Left ventricle myocardium superior (tissue), 1 donor: ENCODE measurements at regions of chr3 and their contacts with region 1.

Region 1: GRCh38 chr3:155701882-155702465 is 42.9 kb downstream of the PLCH1 start:
- DNase-seq: no peak
- ATAC-seq: peak; percentile 77

Region 2: DNA sequence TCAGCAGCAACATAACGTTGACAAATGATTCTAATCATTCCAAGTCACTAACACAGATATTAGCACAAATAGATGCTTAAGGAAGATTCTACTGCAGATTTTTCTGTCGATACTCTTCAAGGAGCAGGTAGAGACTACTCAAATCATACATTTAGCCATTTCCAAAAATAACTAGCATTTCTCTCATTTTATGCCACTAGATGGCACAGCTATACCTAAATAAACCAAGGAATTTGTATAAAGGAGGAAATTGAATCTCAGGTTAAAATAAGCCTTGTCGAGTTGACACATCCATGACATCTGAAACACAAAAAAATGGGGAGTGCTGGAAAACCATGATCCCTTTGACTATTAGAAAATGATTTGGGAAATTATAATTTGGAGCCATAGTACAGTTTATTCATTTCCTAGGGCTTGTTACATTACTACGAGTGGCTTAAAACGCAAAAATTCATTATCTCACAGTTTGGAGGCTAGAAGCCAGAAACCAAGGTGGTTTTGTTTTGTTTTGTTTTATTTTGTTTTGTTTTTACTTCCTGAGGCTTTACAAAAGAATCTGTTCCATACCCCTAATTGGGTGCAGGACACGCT is 349.0 kb before region 1 on chr3:
- intact Hi-C with region 1: loop called (anchors 10 kb)
- DNase-seq: no peak
- ATAC-seq: peak; percentile 36

Region 3: DNA sequence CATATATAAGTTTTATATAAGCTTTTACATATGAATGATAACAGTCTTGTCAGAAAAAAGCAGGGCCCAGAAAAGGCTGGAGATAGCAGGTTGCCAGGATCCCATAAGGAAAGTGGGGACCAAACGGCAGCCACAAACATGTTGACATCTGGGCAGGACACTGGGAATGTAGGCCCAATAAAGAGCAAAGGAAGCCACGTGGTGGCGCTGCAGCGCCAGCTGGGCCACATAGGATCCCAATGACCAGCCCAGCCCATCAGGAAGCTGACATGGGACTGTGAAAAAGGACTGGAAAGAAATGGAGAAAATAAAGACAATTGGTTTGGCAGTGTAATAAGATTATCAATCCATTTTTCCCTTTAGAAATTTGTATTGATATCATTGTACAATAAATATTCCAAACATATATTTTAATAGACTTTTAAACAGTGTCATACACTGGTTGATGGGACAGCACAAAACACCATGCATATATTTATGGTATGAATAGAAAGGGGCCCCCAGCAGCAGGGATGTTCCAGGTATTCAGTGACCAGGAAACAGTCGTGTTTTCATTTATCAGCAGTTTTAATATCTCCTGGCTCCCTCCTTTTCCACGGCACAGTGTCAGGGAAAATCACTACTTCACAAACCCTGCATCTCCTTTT is 319.5 kb before region 1 on chr3:
- intact Hi-C with region 1: loop called (anchors 2 kb)
- DNase-seq: peak; percentile 91
- ATAC-seq: peak; percentile 89

Region 4: DNA sequence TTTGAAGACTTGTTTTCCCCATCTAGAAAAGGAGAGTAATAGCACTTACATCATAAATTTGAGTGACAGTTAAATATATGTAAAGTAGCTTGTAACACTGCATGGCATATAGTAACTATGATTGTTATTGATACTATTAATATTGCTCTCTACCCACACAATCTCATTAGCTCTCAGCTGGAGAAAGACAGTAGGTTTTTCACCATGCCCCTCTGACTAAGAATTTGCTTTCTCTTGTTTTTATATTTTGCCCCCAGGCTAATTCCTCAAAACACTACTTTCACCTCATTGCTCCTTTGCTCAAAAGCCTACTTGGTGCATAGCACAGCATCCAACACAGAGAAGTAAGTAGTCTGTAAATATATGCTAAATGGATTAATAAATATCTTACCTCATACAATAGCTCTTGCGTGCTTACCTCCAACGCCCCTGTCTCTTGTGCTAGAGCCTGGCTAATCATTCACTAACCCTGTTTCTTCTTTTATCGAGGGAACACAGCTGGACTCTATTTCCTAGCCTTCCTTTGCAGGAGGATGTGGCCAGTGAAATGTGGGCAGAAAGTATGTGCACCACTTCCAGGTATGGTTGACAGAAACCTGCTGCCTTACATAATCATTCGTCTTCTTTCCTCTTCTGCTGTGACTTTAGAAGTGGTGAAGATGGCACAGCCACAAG is 147.1 kb before region 1 on chr3:
- intact Hi-C with region 1: no loop called
- DNase-seq: no peak
- ATAC-seq: no peak

Region 5: DNA sequence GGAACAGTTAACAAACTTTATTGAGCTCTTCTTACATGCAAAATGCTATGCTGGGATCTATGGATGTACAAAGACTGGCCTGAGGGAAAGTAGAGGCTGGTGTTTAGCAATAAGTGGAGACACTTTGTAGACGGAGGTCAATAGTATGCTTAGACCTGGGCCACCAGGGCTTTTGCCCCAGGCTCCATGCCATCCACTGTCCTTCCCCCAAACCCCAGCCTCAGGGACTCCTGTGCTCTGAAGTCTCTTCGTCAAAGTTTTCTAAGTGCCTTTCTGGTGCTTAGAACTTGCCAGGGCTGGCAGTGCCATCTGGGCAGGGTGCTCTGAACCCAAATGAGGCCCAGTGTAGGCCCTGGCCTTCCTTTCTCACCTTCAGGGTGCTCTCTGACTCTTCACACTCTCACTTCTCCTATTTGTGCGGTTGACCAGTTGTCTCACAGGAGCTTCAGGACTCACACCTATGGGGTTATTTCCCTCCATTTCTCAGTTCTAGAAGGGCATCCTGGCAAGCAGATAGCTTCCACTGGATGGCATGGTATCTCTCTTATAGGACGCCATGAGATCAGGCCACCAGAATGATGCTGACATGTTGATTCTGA is 396.6 kb after region 1 on chr3:
- intact Hi-C with region 1: no loop called
- DNase-seq: no peak
- ATAC-seq: no peak